ENCODE measurements at regions of chr18 and their contacts with region 1.

Region 1: DNA sequence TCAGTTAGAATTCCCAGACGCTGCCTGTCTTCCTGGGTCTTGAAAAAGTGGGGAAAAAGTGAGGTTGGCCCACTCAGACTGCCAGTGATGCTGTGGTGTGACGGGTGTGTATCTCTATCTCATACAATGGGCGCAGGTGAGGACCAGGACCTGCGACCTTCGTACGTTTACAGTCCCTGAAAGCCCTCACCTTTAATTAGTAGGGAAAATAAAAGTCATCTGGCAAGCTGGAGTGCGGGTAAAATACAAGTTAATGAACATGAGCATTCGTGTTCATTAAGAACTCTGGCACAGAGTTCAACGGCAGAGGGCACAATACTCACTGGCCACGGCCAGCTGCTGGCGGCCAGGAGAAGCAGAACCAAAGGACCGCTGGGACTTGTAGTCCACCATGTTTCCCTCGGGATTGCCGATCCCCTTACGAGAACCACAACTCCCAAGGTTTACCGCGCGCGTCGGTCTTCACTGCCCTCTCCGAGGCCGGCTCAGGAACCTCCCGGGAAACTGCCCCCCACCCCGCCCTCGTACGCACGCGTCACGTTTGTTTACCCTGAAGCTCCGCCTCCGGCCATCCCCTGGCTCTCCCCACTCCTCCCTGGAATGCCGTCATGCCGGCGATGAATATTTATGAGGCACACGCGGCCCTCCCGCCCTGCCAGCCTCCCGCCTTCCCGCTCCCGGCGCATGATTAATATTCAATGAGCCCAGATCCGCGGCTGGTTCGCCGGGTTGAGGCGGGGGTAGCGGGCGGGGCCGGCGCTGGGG is 488 bp upstream of the PHLPP1 start:
- DNase-seq: peak; percentile 98 to 100
- H3K4me3 ChIP-seq: peak overlapping the region; percentile 78 to 81
- H3K27ac ChIP-seq: peak overlapping the region; percentile 93 to 95
- H3K4me1 ChIP-seq: peaks cover 0 to 5% of the 10 kb centered on the region in 2 donors
- H3K27me3 ChIP-seq: no peaks in the 10 kb centered on the region
- CTCF ChIP-seq: peak; percentile 56 to 80 (median 78)

Region 2: DNA sequence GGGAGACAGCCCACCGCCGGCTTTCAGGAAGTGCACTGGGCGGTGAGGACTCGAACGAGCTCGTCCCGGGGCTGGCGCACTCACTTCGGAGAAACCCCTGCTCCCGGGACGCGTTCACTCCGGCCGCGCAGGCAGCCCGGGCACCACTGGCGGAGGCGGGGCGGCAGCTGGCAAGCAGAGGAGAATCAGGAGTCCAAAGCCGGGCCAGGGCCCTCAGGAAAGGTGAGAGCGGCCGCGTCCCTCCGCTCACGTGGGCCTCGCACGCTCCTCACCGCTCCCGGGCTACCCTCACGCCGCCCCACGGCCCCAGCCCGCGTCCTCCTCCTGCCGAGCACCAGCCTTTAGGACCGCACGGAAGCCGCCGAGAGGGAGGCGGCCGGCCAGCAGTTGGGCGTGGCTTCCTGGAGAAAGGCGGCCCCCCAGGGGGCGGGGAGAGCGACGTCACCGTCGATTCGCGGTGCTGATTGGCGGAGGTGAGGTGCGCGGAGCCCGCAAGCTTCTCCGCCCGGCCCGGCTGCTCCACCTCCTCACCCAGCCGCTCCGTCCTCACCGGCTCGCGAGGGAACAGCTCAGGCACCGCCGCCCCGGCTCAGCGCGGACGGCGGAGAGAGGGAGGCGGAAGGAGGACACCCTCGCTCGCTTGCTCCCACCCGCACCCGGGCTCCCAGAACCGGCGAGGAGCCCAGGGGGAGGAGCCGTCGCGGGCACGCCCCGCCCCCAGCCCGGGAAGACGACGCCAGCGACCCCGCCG is 192.2 kb before region 1 on chr18 and contains the start of gene ZCCHC2:
- intact Hi-C with region 1: loop called (anchors 2 kb)
- DNase-seq: peak; percentile 90 to 98
- H3K4me3 ChIP-seq: peak within 1 kb of the TSS; percentile 95 to 96
- H3K27ac ChIP-seq: peak within 1 kb of the TSS; percentile 96 to 99
- H3K4me1 ChIP-seq: peaks cover 5 to 18% of the 10 kb centered on the region in 2 donors
- H3K27me3 ChIP-seq: no peaks in the 10 kb centered on the region
- CTCF ChIP-seq: no peak
- total RNA-seq, gene ZCCHC2: 22.9 TPM

Region 3: DNA sequence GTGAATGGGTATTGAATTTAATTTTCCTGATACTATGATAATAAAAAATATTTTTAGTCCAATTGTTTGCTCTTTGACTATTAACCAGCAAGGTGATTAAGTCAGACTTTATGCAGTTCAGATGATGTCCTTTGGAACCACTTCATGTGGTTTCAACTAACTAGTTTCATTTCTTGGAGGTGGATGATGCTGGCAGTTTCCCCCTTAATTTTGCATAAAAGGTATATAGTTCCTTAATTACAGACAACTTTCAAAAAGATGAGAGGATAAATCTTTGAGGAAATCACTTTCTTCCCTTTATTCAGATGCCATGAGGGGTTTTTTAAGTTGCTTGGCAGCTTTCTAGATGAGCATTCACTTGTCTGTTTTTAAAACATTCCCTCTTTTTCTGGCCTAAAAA is 223.6 kb after region 1 on chr18:
- intact Hi-C with region 1: loop called (anchors 5 kb)
- DNase-seq: no peak
- H3K4me3 ChIP-seq: no peak overlapping the region
- H3K27ac ChIP-seq: peak overlapping the region; percentile 58 to 82
- H3K4me1 ChIP-seq: peaks cover 6 to 30% of the 10 kb centered on the region in 2 donors
- H3K27me3 ChIP-seq: no peaks in the 10 kb centered on the region
- CTCF ChIP-seq: no peak

Region 4: DNA sequence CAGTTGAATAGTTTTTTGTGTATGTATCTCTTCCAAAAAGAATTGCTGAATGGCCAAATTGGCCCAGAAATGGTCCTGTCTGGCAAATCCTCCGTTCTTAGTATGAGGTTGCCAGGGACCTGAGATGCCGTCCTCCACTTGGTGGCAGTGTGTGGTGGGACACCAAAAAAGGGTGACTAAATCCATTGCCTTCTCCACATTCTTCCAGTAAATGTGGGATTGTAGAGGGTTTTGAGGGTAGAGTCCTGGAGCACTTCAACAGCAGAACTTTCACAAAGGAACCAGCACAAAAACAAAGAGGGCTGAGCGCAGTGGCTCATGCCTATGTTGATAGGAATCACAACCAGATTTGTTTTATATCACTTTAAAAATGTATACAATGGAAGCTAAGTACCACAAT is 404.8 kb after region 1 on chr18:
- intact Hi-C with region 1: loop called (anchors 10 kb)
- DNase-seq: no peak
- H3K4me3 ChIP-seq: no peak overlapping the region
- H3K27ac ChIP-seq: no peak overlapping the region
- H3K4me1 ChIP-seq: peaks cover 0 to 2% of the 10 kb centered on the region in 2 donors
- H3K27me3 ChIP-seq: no peaks in the 10 kb centered on the region
- CTCF ChIP-seq: peak; percentile 14 to 57 (median 44)

Region 5: GRCh38 chr18:63422087-63422809 is 707.4 kb after region 1 on chr18 and contains the start of gene VPS4B:
- intact Hi-C with region 1: loop called (anchors 1 kb)
- DNase-seq: peak; percentile 97 to 100
- H3K4me3 ChIP-seq: peak within 1 kb of the TSS; percentile 94 to 99
- H3K27ac ChIP-seq: peak within 1 kb of the TSS; percentile 92 to 93
- H3K4me1 ChIP-seq: peaks cover 0 to 10% of the 10 kb centered on the region in 2 donors
- H3K27me3 ChIP-seq: no peaks in the 10 kb centered on the region
- CTCF ChIP-seq: no peak
- total RNA-seq, gene VPS4B: 16.7 TPM

Region 6: DNA sequence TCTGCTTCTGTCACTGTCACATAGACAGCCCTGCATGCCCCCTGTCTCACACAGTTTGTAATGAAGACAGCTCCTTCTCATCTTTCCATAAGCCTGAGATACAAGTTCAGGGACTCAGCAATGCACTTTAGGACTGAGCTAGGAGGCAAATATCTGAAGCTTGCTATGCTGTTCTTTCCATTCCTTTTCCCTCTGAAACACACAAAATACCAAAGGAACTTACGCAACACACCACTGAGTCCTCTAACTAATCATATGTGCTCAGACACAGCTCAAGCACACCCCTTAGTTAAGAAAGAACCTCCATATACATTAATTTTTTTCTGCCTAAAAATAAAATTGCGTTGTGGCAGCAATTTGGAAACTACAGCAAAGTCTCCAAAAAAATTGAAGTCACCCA is 1272.9 kb after region 1 on chr18:
- intact Hi-C with region 1: no loop called
- DNase-seq: no peak
- H3K4me3 ChIP-seq: no peak overlapping the region
- H3K27ac ChIP-seq: no peak overlapping the region
- H3K4me1 ChIP-seq: no peaks in the 10 kb centered on the region
- H3K27me3 ChIP-seq: no peaks in the 10 kb centered on the region
- CTCF ChIP-seq: no peak